Heart left ventricle (tissue), 16 donors: ENCODE measurements at regions of chr18 and their contacts with region 1.

Region 1: GRCh38 chr18:11761553-11761952 is 72.5 kb downstream of the GNAL start:
- DNase-seq: no peak
- ATAC-seq: no peak
- H3K4me3 ChIP-seq: no peak overlapping the region
- H3K27ac ChIP-seq: no peak overlapping the region
- H3K4me1 ChIP-seq: no peaks in the 10 kb centered on the region
- H3K27me3 ChIP-seq: no peaks in the 10 kb centered on the region
- CTCF ChIP-seq: peak in 2 of 12 donors; percentile 10 to 33
- POLR2A ChIP-seq: no peak

Region 2: GRCh38 chr18:11818486-11819203 is 57.1 kb after region 1 on chr18:
- intact Hi-C with region 1: loop called in 2 of 10 experiments (anchors 10 kb)
- DNase-seq: no peak
- ATAC-seq: no peak
- H3K4me3 ChIP-seq: no peak overlapping the region
- H3K27ac ChIP-seq: no peak overlapping the region
- H3K4me1 ChIP-seq: no peaks in the 10 kb centered on the region
- H3K27me3 ChIP-seq: no peaks in the 10 kb centered on the region
- CTCF ChIP-seq: no peak
- POLR2A ChIP-seq: no peak

Region 3: GRCh38 chr18:11826836-11827235 is 65.3 kb after region 1 on chr18:
- intact Hi-C with region 1: loop called in 1 of 10 experiments (anchors 10 kb)
- DNase-seq: no peak
- ATAC-seq: no peak
- H3K4me3 ChIP-seq: no peak overlapping the region
- H3K27ac ChIP-seq: no peak overlapping the region
- H3K4me1 ChIP-seq: no peaks in the 10 kb centered on the region
- H3K27me3 ChIP-seq: no peaks in the 10 kb centered on the region
- CTCF ChIP-seq: no peak
- POLR2A ChIP-seq: no peak